ENCODE measurements at regions of chr3 and their contacts with region 1.

Region 1: DNA sequence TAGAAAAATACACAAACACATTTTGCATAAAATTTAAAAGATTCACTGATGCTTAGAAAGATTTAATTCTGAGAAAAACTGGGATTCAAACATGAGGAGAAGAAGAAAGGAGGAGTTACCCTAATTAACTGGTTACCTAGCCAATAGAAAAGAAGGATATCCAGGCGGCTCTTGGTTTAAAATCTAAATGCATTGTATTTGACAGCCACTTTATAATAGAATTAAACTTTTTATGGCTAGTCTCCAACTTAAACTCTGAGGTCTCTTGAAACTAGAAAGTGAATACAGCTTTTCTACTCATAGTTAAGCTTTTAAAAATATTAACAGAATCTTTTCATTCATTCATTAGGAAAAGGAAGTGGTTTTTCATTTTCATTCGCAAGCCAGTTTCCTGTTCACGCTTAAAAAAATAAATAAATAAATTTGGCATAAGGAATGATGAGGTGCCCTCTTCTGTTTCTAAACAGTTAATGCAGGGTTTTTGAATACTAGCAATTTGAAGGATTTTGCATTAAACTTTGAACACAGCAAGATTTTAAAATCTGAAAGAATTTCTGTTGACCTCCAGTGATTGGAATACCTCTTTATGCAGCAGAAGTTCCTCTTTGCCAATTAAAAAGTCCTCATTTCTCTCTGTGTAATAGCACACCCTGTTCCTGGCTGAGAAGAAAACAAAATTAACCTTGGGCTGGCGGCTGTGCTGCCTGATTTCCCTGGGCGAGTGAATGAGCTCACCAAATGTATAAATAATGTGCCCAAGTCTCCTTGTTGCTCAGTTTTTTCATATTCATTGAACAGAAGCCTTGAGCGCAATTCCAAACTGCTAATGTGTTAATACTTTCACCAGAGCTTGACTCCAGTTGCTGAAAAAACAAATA is 105.1 kb downstream of the ZMAT3 start:
- DNase-seq: peak; percentile 32
- ATAC-seq: peak; percentile 26
- H3K4me3 ChIP-seq: peak overlapping the region; percentile 39; the same call in 1 of the 2 replicates
- H3K27ac ChIP-seq: peak overlapping the region; percentile 73
- H3K4me1 ChIP-seq: peaks cover 32% of the 10 kb centered on the region
- H3K27me3 ChIP-seq: no peaks in the 10 kb centered on the region
- CTCF ChIP-seq: peak; percentile 41 to 61 (median 45); a peak in 5 of 6 replicates
- EP300 ChIP-seq: no peak; a peak in 1 of 4 replicates
- POLR2A ChIP-seq: no peak
- RAD21 ChIP-seq: peak; percentile 91

Region 2: GRCh38 chr3:178513546-178514380 is 452.8 kb before region 1 on chr3:
- CTCF ChIA-PET with region 1: interaction called, 6 read pairs
- POLR2A ChIA-PET with region 1: no interaction called
- RAD21 ChIA-PET with region 1: interaction called, 11 read pairs
- SMC1A ChIA-PET with region 1: no interaction called
- in situ Hi-C with region 1: no loop called
- intact Hi-C with region 1: loop called (anchors 1 kb)
- DNase-seq: no peak
- ATAC-seq: peak; percentile 28
- H3K4me3 ChIP-seq: no peak overlapping the region
- H3K27ac ChIP-seq: peak overlapping the region; percentile 97
- H3K4me1 ChIP-seq: peaks cover 57% of the 10 kb centered on the region
- H3K27me3 ChIP-seq: no peaks in the 10 kb centered on the region
- CTCF ChIP-seq: no peak
- EP300 ChIP-seq: peak; percentile 76 to 98
- POLR2A ChIP-seq: no peak
- RAD21 ChIP-seq: peak; percentile 40

Measured in GM12878 (cell line).